OCI-LY7 (cell line): ENCODE measurements at regions of chr12 and their contacts with region 1.

Region 1: GRCh38 chr12:103956516-103957027 is 9.1 kb upstream of the TDG start:
- DNase-seq: no peak
- H3K4me3 ChIP-seq: peak overlapping the region; percentile 86
- H3K27ac ChIP-seq: peak overlapping the region; percentile 76
- H3K4me1 ChIP-seq: peaks cover 12% of the 10 kb centered on the region
- CTCF ChIP-seq: no peak

Region 2: GRCh38 chr12:103884316-103884715 is 72.3 kb before region 1 on chr12:
- CTCF ChIA-PET with region 1: no interaction called
- POLR2A ChIA-PET with region 1: no interaction called
- intact Hi-C with region 1: loop called (anchors 2 kb)
- DNase-seq: peak; percentile 61
- H3K4me3 ChIP-seq: no peak overlapping the region
- H3K27ac ChIP-seq: no peak overlapping the region
- H3K4me1 ChIP-seq: peaks cover 13% of the 10 kb centered on the region
- CTCF ChIP-seq: peak; percentile 80

Region 3: DNA sequence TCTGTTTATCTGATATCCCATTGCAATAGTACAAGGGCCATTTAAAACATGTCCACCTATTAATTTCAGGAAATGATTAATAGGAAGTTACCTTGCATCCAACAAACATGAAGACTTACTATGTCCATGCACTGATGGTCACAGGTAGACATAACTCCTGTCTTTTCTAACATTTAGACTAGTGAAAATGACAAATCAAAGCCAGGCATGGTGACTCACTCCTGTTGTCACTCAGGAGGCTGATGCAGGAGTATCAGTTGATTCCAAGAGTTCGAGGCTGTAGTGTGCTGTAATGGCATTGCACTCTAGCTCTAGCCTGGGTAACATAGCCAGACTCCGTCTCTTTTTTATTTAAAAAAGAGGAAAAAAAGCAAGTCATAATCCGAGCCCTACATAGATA is 11.6 kb before region 1 on chr12:
- CTCF ChIA-PET with region 1: interaction called, 3 read pairs
- POLR2A ChIA-PET with region 1: interaction called, 11 read pairs
- intact Hi-C with region 1: no loop called
- DNase-seq: no peak
- H3K4me3 ChIP-seq: no peak overlapping the region
- H3K27ac ChIP-seq: no peak overlapping the region
- H3K4me1 ChIP-seq: no peaks in the 10 kb centered on the region
- CTCF ChIP-seq: no peak

Region 4: GRCh38 chr12:104137913-104138796 is 181.6 kb after region 1 on chr12 and contains the start of gene NFYB:
- CTCF ChIA-PET with region 1: no interaction called
- POLR2A ChIA-PET with region 1: no interaction called
- intact Hi-C with region 1: loop called (anchors 5 kb)
- DNase-seq: peak; percentile 97
- H3K4me3 ChIP-seq: peak within 1 kb of the TSS; percentile 88
- H3K27ac ChIP-seq: peak within 1 kb of the TSS; percentile 82
- H3K4me1 ChIP-seq: peaks cover 31% of the 10 kb centered on the region
- CTCF ChIP-seq: no peak
- total RNA-seq, gene NFYB: 21.6 and 30.2 TPM in 2 replicates